Activated CD4-positive, alpha-beta T cell treated with anti-CD3 and anti-CD28 coated beads, Interleukin-2, amount 10 ng/mL, durations not matched to agents 24 days and 14 days (primary cell): ENCODE measurements at regions of chr14 and their contacts with region 1.

Region 1: GRCh38 chr14:73785873-73786695 is 65.5 kb upstream of the PTGR2 start:
- DNase-seq: peak; percentile 91
- H3K4me3 Mint-ChIP-seq: peak overlapping the region; percentile 94
- H3K27ac Mint-ChIP-seq: peak overlapping the region; percentile 95
- H3K4me1 Mint-ChIP-seq: peaks cover 60% of the 10 kb centered on the region
- H3K27me3 Mint-ChIP-seq: no peaks in the 10 kb centered on the region

Region 2: GRCh38 chr14:73771848-73772638 is 14.0 kb before region 1 on chr14:
- intact Hi-C with region 1: loop called (anchors 1 kb)
- DNase-seq: peak; percentile 87
- H3K4me3 Mint-ChIP-seq: peak overlapping the region; percentile 49
- H3K27ac Mint-ChIP-seq: peak overlapping the region; percentile 81
- H3K4me1 Mint-ChIP-seq: peaks cover 55% of the 10 kb centered on the region
- H3K27me3 Mint-ChIP-seq: no peaks in the 10 kb centered on the region

Region 3: DNA sequence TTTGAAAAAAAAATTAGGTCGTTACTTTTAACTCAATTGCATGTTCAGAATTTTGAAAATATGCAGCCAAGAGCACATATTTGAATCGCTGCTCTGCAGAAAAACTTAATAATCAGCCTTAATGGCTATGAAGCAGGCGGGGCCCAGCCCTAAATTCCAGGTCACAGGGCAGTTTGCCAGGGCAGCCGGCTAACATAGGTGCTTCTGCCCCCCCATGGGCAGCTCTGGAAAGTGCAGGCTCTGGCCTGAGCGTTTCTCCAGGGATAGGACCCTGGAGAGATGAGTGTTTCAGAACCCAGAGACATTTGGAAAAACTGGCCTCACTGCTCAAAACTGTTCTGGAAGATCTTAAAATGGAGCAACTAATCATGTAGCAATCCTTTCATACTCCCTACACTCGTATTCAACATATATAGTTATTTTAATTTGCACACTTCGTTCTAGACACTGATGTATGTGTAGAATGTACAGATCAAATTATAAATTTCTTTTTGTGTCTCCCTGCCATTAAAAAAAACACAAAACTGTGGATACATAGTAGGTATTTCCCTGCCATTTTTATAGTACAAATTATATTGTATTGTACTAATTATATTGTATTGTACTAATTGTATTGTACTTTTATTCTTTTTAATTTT is 39.6 kb after region 1 on chr14:
- intact Hi-C with region 1: loop called (anchors 1 kb)
- DNase-seq: peak; percentile 91
- H3K4me3 Mint-ChIP-seq: no peak overlapping the region
- H3K27ac Mint-ChIP-seq: no peak overlapping the region
- H3K4me1 Mint-ChIP-seq: peaks cover 16% of the 10 kb centered on the region
- H3K27me3 Mint-ChIP-seq: peaks cover 5% of the 10 kb centered on the region